Activated CD4-positive, alpha-beta memory T cell treated with anti-CD3 and anti-CD28 coated beads for 36 hours (primary cell): ENCODE measurements at regions of chr13 and their contacts with region 1.

Region 1: GRCh38 chr13:99501184-99501847 is at the start of gene TM9SF2:
- DNase-seq: peak; percentile 98
- H3K4me3 Mint-ChIP-seq: peak within 1 kb of the TSS; percentile 88
- H3K27ac Mint-ChIP-seq: peak within 1 kb of the TSS; percentile 88
- H3K4me1 Mint-ChIP-seq: peaks cover 67% of the 10 kb centered on the region
- H3K27me3 Mint-ChIP-seq: no peaks in the 10 kb centered on the region
- total RNA-seq, gene TM9SF2: 67.2 to 72.0 TPM

Region 2: DNA sequence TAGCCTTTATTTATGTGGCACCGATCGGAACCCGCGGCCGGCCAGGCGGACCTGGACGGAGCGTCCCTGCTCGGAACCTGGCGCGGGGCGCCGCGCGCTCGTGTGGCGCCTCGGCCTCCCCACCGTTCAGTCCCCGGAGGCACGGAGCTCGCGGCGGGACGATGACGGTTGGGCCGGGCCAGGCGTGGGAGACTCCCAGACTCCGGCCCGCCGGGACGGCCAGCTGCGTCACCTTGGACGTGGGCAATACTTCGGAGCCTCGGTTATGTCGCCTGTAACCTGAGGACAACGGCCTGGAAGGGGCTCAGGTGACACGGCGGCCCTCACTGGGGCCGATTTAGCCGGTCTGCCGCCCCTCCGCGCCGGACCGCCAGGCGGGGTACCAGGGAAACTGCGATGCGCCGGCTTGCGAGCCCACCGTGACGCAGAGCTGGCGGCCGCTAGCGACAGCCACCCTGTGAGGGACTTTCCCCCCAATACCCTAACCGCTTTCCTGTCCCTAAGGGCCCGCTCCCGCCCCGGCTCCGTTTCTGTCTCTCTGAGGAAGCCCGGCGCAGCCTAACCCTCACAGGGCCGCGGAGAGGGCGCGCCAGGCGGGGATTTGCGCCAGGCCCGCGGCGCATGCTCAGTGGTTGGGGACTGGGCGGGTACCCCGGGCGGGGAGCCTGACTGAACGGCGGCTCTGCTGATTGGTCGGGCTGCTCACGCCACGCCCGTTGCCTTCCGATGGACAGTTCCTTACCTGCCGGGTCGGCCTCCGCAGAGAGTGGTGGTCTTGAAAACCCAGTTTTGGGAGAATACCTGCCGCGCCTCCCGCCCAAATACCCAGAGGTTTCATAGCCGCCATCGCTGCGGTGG is 414.0 kb before region 1 on chr13:
- CTCF ChIA-PET with region 1: no interaction called
- POLR2A ChIA-PET with region 1: no interaction called
- intact Hi-C with region 1: loop called (anchors 5 kb)
- DNase-seq: peak; percentile 95
- H3K4me3 Mint-ChIP-seq: peak overlapping the region; percentile 99
- H3K27ac Mint-ChIP-seq: peak overlapping the region; percentile 97
- H3K4me1 Mint-ChIP-seq: peaks cover 32% of the 10 kb centered on the region
- H3K27me3 Mint-ChIP-seq: no peaks in the 10 kb centered on the region

Region 3: GRCh38 chr13:99307648-99308339 is 193.5 kb before region 1 on chr13:
- CTCF ChIA-PET with region 1: no interaction called
- POLR2A ChIA-PET with region 1: interaction called, 4 read pairs
- intact Hi-C with region 1: loop called (anchors 5 kb)
- DNase-seq: peak; percentile 91
- H3K4me3 Mint-ChIP-seq: peak overlapping the region; percentile 93
- H3K27ac Mint-ChIP-seq: peak overlapping the region; percentile 99
- H3K4me1 Mint-ChIP-seq: peaks cover 72% of the 10 kb centered on the region
- H3K27me3 Mint-ChIP-seq: no peaks in the 10 kb centered on the region

Region 4: DNA sequence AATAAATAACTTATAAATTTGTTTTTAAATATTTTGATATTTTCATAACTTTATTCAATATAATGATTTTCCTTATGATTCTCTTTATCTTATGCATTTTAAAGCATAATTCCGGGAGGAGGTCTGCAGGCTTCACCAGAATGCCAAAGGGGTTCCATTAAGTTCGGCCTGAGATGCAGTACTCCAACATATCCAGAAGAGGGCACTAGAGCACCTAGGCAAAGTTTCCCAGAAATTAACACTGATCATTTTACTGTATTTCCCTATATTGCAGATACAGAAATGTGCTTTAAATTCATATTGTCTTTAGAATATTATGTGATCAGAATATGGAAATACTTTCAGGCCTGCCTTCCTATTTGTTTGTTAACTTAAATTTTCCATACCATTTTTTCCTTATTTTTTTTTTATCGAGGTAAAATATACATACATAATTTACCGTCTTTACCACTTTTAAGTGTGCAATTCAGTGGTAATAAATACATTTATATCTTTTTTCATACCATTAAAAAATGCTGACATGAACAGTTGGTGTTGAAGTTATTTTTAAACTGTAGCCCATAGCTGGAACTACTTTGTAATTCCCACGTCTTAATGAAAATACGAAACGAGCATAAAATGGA is 58.9 kb before region 1 on chr13:
- CTCF ChIA-PET with region 1: interaction called, 58 read pairs
- POLR2A ChIA-PET with region 1: no interaction called
- intact Hi-C with region 1: loop called (anchors 1 kb)
- DNase-seq: peak; percentile 58
- H3K4me3 Mint-ChIP-seq: no peak overlapping the region
- H3K27ac Mint-ChIP-seq: no peak overlapping the region
- H3K4me1 Mint-ChIP-seq: peaks cover 13% of the 10 kb centered on the region
- H3K27me3 Mint-ChIP-seq: peaks cover 8% of the 10 kb centered on the region

Region 5: GRCh38 chr13:99464441-99464949 is 36.8 kb before region 1 on chr13:
- CTCF ChIA-PET with region 1: interaction called, 3 read pairs
- POLR2A ChIA-PET with region 1: interaction called, 4 read pairs
- intact Hi-C with region 1: loop called (anchors 1 kb)
- DNase-seq: peak; percentile 25
- H3K4me3 Mint-ChIP-seq: peak overlapping the region; percentile 42
- H3K27ac Mint-ChIP-seq: peak overlapping the region; percentile 86
- H3K4me1 Mint-ChIP-seq: peaks cover 30% of the 10 kb centered on the region
- H3K27me3 Mint-ChIP-seq: peaks cover 2% of the 10 kb centered on the region

Region 6: GRCh38 chr13:99566125-99567083 is 65.1 kb after region 1 on chr13:
- CTCF ChIA-PET with region 1: no interaction called
- POLR2A ChIA-PET with region 1: no interaction called
- intact Hi-C with region 1: no loop called
- DNase-seq: no peak
- H3K4me3 Mint-ChIP-seq: peak overlapping the region; percentile 44
- H3K27ac Mint-ChIP-seq: no peak overlapping the region
- H3K4me1 Mint-ChIP-seq: peaks cover 5% of the 10 kb centered on the region
- H3K27me3 Mint-ChIP-seq: no peaks in the 10 kb centered on the region

Region 7: GRCh38 chr13:99606324-99607066 is 105.2 kb after region 1 on chr13:
- CTCF ChIA-PET with region 1: interaction called, 3 read pairs
- POLR2A ChIA-PET with region 1: no interaction called
- intact Hi-C with region 1: loop called (anchors 1 kb)
- DNase-seq: peak; percentile 93
- H3K4me3 Mint-ChIP-seq: peak within 1 kb of the TSS; percentile 85
- H3K27ac Mint-ChIP-seq: peak within 1 kb of the TSS; percentile 72
- H3K4me1 Mint-ChIP-seq: peaks cover 33% of the 10 kb centered on the region
- H3K27me3 Mint-ChIP-seq: no peaks in the 10 kb centered on the region